ENCODE measurements at regions of chr13 and their contacts with region 1.

Region 1: GRCh38 chr13:91454666-91455065 is 56.2 kb downstream of the GPC5 start:
- DNase-seq: no peak
- H3K4me3 ChIP-seq: no peak overlapping the region
- H3K27ac ChIP-seq: no peak overlapping the region
- H3K4me1 ChIP-seq: no peaks in the 10 kb centered on the region
- H3K27me3 ChIP-seq: no peaks in the 10 kb centered on the region
- CTCF ChIP-seq: no peak

Region 2: GRCh38 chr13:91482427-91482826 is 27.8 kb after region 1 on chr13:
- CTCF ChIA-PET with region 1: no interaction called
- POLR2A ChIA-PET with region 1: no interaction called
- intact Hi-C with region 1: loop called (anchors 1 kb)
- DNase-seq: peak; percentile 87
- H3K4me3 ChIP-seq: no peak overlapping the region
- H3K27ac ChIP-seq: no peak overlapping the region
- H3K4me1 ChIP-seq: peaks cover 8% of the 10 kb centered on the region
- H3K27me3 ChIP-seq: no peaks in the 10 kb centered on the region
- CTCF ChIP-seq: no peak